GM10248 (cell line): ENCODE measurements at regions of chr11 and their contacts with region 1.

Region 1: DNA sequence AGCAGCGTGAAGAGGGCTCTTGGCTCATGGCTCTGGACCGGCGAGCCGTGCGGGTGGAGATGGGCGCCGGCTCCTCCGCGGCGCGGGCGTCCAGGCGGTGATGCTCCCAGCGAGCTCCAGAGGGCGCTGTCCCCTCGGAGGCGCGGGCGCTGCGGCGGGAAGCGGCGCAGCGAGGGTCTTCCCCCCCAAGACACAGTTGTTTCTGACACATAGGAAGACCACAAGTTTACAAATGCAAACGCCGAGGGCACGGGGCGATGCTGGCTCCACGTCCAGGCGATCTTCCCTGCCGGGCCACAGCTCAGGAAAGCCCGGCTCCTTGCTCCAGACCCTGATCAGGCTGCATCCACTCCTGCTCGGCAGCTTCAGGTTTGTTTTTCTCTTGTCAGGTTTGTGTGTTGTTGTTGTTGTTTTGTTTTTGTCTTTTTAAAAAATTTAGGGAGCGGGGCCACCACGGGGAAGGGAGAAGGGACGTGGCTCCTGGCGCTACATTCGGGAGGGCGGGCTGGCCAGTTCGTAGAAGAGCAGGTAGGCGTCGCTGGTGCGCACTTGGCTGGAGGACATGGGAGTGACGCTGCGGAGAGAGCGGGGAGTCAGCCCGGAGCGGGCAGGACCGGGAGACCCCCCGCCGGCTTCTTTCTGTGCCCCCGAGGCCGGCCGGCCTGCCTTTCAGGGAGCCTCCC is 10.0 kb upstream of the MFRP start:
- DNase-seq: peak; percentile 87
- CTCF ChIP-seq: peak; percentile 97

Region 2: GRCh38 chr11:119306373-119306890 is 50.1 kb before region 1 on chr11:
- CTCF ChIA-PET with region 1: interaction called, 18 read pairs
- POLR2A ChIA-PET with region 1: no interaction called
- DNase-seq: no peak
- CTCF ChIP-seq: no peak

Region 3: GRCh38 chr11:119381181-119381988 is 24.9 kb after region 1 on chr11 and contains the start of gene USP2:
- CTCF ChIA-PET with region 1: interaction called, 159 read pairs
- POLR2A ChIA-PET with region 1: no interaction called
- DNase-seq: peak; percentile 95
- CTCF ChIP-seq: peak; percentile 89

Region 4: GRCh38 chr11:119551726-119552510 is 195.4 kb after region 1 on chr11:
- CTCF ChIA-PET with region 1: no interaction called
- POLR2A ChIA-PET with region 1: no interaction called
- DNase-seq: no peak
- CTCF ChIP-seq: no peak

Region 5: GRCh38 chr11:119584193-119585037 is 227.9 kb after region 1 on chr11:
- CTCF ChIA-PET with region 1: no interaction called
- POLR2A ChIA-PET with region 1: no interaction called
- DNase-seq: no peak
- CTCF ChIP-seq: no peak